ENCODE measurements at regions of chr5 and their contacts with region 1.

Region 1: GRCh38 chr5:89282554-89283510 is 399.8 kb upstream of the MEF2C start:
- DNase-seq: no peak
- CTCF ChIP-seq: no peak

Region 2: GRCh38 chr5:89270901-89271300 is 11.9 kb before region 1 on chr5:
- CTCF ChIA-PET with region 1: interaction called, 11 read pairs
- POLR2A ChIA-PET with region 1: no interaction called
- DNase-seq: no peak
- CTCF ChIP-seq: no peak

Region 3: DNA sequence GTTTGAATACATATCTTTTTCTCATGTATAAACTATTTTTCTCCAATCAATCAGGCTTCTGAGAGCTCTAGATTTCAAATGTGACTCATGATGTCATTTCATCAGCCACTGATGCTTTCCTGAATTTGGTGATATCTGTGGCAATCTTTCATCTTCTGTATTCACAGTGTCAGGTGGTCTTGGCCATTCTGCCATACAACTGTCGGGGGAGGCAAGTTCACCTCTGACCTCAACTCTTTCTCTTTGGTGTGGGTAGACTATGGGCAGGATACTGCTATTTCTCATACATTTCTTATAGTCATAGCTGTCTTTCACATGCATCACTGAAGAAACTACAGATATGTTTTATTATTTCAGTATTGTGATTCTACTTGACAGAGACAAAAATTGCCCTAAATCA is 14.2 kb after region 1 on chr5:
- CTCF ChIA-PET with region 1: interaction called, 10 read pairs
- POLR2A ChIA-PET with region 1: no interaction called
- DNase-seq: no peak
- CTCF ChIP-seq: no peak

Region 4: DNA sequence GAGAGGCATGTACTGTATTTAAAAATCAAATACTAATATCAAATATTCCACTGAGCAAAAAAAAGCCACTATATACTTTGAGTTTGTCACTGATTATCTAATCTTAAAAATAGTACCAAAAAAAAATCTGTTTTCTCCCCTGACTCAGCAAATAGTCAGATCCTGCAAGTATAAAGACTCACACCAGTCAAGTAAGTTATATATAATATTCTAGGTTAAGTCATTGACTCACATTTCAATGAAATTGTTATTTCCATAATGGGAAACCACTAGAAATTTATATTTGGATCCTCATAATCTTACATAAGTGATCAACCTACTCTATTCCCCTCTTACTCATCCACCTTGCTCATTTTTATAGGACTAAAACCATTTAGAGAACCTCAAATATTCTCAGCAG is 47.3 kb after region 1 on chr5:
- CTCF ChIA-PET with region 1: no interaction called
- POLR2A ChIA-PET with region 1: no interaction called
- DNase-seq: no peak
- CTCF ChIP-seq: no peak